ENCODE measurements at regions of chr12 and their contacts with region 1.

Region 1: GRCh38 chr12:76559400-76560085 is at the start of gene OSBPL8:
- DNase-seq: peak; percentile 89
- H3K4me3 Mint-ChIP-seq: peak within 1 kb of the TSS; percentile 93
- H3K27ac Mint-ChIP-seq: peak within 1 kb of the TSS; percentile 96
- H3K4me1 Mint-ChIP-seq: peaks cover 39% of the 10 kb centered on the region
- H3K27me3 Mint-ChIP-seq: no peaks in the 10 kb centered on the region
- total RNA-seq, gene OSBPL8: 87.9 TPM in 2 replicates

Region 2: GRCh38 chr12:75635606-75636410 is 923.7 kb before region 1 on chr12:
- intact Hi-C with region 1: loop called (anchors 5 kb)
- DNase-seq: no peak
- H3K4me3 Mint-ChIP-seq: no peak overlapping the region
- H3K27ac Mint-ChIP-seq: peak overlapping the region; percentile 54
- H3K4me1 Mint-ChIP-seq: peaks cover 38% of the 10 kb centered on the region
- H3K27me3 Mint-ChIP-seq: peaks cover 3% of the 10 kb centered on the region

Region 3: GRCh38 chr12:76360316-76360715 is 199.2 kb before region 1 on chr12:
- intact Hi-C with region 1: no loop called
- DNase-seq: no peak
- H3K4me3 Mint-ChIP-seq: no peak overlapping the region
- H3K27ac Mint-ChIP-seq: no peak overlapping the region
- H3K4me1 Mint-ChIP-seq: no peaks in the 10 kb centered on the region
- H3K27me3 Mint-ChIP-seq: no peaks in the 10 kb centered on the region

Region 4: GRCh38 chr12:76470028-76470939 is 89.3 kb before region 1 on chr12:
- intact Hi-C with region 1: loop called (anchors 5 kb)
- DNase-seq: no peak
- H3K4me3 Mint-ChIP-seq: no peak overlapping the region
- H3K27ac Mint-ChIP-seq: no peak overlapping the region
- H3K4me1 Mint-ChIP-seq: peaks cover 8% of the 10 kb centered on the region
- H3K27me3 Mint-ChIP-seq: no peaks in the 10 kb centered on the region

Region 5: GRCh38 chr12:76544601-76545261 is 14.8 kb before region 1 on chr12:
- intact Hi-C with region 1: loop called (anchors 1 kb)
- DNase-seq: no peak
- H3K4me3 Mint-ChIP-seq: no peak overlapping the region
- H3K27ac Mint-ChIP-seq: no peak overlapping the region
- H3K4me1 Mint-ChIP-seq: peaks cover 58% of the 10 kb centered on the region
- H3K27me3 Mint-ChIP-seq: no peaks in the 10 kb centered on the region

Region 6: GRCh38 chr12:76763743-76764675 is 204.5 kb after region 1 on chr12 and contains the start of gene ZDHHC17:
- intact Hi-C with region 1: loop called (anchors 1 kb)
- DNase-seq: peak; percentile 91
- H3K4me3 Mint-ChIP-seq: peak within 1 kb of the TSS; percentile 98
- H3K27ac Mint-ChIP-seq: peak within 1 kb of the TSS; percentile 94
- H3K4me1 Mint-ChIP-seq: peaks cover 28% of the 10 kb centered on the region
- H3K27me3 Mint-ChIP-seq: peaks cover 12% of the 10 kb centered on the region
- total RNA-seq, gene ZDHHC17: 26.7 and 28.6 TPM in 2 replicates

Region 7: DNA sequence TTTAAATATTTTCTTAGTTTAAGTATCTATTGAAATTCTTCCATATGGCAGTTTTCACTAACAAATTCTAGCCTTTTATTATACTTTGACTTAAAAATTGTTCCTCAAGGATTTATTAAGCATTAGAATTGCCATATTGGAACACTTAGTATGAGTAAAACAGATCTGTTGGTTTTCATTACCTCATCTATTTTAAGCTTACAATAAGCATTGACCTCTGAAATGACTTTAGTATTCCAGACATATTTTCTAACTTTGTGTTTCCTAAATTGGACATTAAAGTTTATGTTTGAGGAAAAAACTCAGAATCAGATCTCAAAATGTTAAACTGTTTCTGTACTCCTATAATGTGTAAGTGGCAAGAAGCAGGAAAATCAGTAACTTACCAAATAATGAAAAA is 270.9 kb after region 1 on chr12:
- intact Hi-C with region 1: no loop called
- DNase-seq: no peak
- H3K4me3 Mint-ChIP-seq: no peak overlapping the region
- H3K27ac Mint-ChIP-seq: no peak overlapping the region
- H3K4me1 Mint-ChIP-seq: no peaks in the 10 kb centered on the region
- H3K27me3 Mint-ChIP-seq: no peaks in the 10 kb centered on the region